ENCODE measurements at regions of chr5 and their contacts with region 1.

Region 1: DNA sequence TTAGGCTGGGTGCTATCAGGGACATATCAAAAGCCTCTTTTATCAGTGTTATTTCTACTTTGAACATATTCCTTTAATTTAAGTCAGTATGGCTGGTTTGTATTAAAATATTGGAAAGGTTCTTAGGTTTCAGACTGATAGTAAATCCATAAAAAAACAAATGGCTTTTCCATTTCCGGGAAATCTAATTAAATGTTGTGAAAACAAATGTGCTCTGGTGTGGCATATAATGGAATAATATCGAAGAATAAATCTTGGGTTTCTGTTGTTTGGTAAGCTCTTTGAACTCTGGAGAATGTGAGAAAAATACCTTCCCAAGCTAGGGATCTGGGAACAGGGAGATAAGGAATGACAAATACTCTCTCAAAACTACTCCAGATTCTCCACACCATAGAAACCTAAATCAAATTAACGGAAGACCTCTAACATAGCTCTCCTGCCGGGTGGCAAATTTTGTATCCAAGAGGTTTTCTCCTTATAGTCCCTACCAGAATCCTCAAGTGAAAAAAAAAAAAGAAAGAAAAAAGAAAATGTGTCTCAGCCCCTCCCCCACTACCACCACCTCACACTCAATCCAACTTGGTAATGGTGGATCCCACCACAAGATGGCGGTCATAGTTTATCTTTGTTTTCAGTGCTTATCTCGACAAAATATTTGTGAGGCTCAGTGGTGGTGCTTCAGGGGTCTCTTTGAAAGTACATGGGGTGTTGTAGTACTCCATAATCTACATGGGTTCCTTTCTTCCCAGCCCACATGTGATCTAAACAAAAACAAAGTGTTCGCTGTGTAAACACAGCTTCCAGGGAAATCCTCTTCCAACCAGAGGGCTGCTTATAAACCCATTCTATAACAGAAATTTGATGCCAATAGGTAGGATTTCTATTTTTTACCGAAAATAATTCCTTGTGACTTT is 54.6 kb upstream of the FST start:
- DNase-seq: no peak

Region 2: GRCh38 chr5:53170748-53171349 is 255.0 kb before region 1 on chr5:
- intact Hi-C with region 1: loop called (anchors 5 kb)
- DNase-seq: no peak

Region 3: DNA sequence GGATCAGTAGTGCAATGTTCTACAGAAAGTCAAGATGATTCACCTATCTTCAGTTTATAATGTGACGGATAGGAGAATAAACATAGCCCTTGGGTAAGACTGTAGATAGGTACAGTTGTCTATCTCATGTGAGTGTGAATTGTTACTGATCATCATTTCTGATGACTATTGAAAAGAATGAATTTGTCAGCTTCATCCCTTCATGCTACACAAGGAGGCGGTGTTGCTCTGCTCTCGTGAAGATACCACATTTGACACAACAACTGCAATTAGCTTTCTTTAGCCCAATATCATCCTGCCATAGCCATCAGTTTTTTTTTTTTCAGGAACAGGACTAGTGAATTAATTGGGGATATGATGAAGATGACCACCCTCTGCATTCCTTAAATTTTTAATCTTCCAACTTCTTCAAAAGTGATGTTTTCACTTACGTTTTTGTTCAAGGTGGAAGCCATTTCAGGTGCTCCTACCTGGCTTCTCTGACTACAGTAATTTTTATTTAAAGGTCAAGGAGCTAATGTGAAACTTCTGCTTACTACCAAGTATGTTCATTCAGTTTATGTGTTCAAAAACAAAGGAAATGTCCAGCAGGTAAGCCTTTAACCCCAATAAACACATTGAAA is 163.4 kb before region 1 on chr5:
- intact Hi-C with region 1: loop called (anchors 10 kb)
- DNase-seq: no peak

Region 4: DNA sequence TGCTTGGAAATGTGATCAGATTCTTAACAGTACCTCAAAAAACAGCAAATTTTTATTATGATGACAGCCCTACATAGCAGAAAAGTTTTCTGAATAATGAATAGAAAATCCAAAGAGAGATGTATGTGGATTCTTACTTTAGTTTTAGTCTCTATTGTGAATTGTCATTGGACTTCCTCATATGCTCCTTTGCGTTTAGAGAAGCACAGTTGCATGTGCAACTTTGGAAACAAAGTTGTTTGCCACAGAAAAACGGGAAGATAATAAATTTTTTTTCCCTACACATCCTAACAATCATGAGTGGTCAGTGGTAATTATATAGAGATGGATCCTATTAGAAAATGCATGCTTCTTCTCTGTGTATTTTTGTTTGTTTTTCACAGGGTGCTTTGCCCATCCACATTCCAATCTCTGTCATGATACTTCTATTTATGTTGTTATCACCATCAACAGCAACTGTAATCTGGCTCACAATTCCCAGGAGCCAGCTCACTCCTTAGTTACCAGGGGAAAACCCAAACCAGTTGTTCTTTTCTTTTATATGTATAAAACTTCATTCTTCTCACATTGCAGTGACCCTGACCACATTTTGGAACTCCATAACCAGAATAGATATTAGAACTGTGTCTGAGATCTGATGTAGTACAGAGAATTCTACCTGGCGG is 253.3 kb after region 1 on chr5:
- intact Hi-C with region 1: no loop called
- DNase-seq: no peak

Measured in cardiac septum (tissue), 1 donor.